Endothelial cell of umbilical vein (primary cell): ENCODE measurements at regions of chr9 and their contacts with region 1.

Region 1: GRCh38 chr9:121286973-121287741 is 19.2 kb downstream of the GSN start:
- DNase-seq: peak; percentile 98
- H3K4me3 ChIP-seq: peak overlapping the region in 1 of 3 experiments; percentile 20
- H3K27ac ChIP-seq: peak overlapping the region; percentile 93
- H3K4me1 ChIP-seq: peaks cover 64% of the 10 kb centered on the region
- H3K27me3 ChIP-seq: no peaks in the 10 kb centered on the region
- CTCF ChIP-seq: peak; percentile 23 to 24
- POLR2A ChIP-seq: no peak

Region 2: GRCh38 chr9:120792898-120793765 is 494.0 kb before region 1 on chr9 and contains the start of gene FBXW2:
- CTCF ChIA-PET with region 1: no interaction called
- POLR2A ChIA-PET with region 1: no interaction called
- dilution Hi-C with region 1: no loop called
- intact Hi-C with region 1: no loop called
- DNase-seq: peak; percentile 92
- H3K4me3 ChIP-seq: peak within 1 kb of the TSS; percentile 78 to 83 (median 82)
- H3K27ac ChIP-seq: peak within 1 kb of the TSS; percentile 64
- H3K4me1 ChIP-seq: peaks cover 27% of the 10 kb centered on the region
- H3K27me3 ChIP-seq: no peaks in the 10 kb centered on the region
- CTCF ChIP-seq: no peak
- POLR2A ChIP-seq: peak; percentile 95
- total RNA-seq, gene FBXW2: 70.2 and 72.3 TPM in 2 replicates

Region 3: DNA sequence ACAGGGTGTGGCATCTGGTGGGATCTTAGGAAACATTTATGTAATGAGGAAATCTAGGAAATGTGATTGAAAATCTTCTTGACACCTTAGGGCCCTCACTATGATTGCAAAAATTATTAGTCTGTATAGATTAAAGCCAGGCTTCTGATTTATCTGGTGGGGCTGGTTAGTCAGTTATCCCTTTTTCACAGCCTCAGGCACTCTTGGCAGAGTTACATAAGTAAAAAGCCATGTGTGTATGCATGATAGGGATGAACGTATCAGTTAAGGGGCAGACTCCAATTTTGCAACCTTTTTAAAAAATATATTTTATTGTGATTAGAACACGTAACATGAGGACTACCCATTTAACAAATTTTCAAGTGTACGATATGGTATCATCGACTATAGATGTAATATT is 54.9 kb before region 1 on chr9:
- CTCF ChIA-PET with region 1: no interaction called
- POLR2A ChIA-PET with region 1: no interaction called
- dilution Hi-C with region 1: no loop called
- intact Hi-C with region 1: no loop called
- DNase-seq: no peak
- H3K4me3 ChIP-seq: no peak overlapping the region
- H3K27ac ChIP-seq: no peak overlapping the region
- H3K4me1 ChIP-seq: peaks cover 6% of the 10 kb centered on the region
- H3K27me3 ChIP-seq: no peaks in the 10 kb centered on the region
- CTCF ChIP-seq: no peak
- POLR2A ChIP-seq: no peak

Region 4: DNA sequence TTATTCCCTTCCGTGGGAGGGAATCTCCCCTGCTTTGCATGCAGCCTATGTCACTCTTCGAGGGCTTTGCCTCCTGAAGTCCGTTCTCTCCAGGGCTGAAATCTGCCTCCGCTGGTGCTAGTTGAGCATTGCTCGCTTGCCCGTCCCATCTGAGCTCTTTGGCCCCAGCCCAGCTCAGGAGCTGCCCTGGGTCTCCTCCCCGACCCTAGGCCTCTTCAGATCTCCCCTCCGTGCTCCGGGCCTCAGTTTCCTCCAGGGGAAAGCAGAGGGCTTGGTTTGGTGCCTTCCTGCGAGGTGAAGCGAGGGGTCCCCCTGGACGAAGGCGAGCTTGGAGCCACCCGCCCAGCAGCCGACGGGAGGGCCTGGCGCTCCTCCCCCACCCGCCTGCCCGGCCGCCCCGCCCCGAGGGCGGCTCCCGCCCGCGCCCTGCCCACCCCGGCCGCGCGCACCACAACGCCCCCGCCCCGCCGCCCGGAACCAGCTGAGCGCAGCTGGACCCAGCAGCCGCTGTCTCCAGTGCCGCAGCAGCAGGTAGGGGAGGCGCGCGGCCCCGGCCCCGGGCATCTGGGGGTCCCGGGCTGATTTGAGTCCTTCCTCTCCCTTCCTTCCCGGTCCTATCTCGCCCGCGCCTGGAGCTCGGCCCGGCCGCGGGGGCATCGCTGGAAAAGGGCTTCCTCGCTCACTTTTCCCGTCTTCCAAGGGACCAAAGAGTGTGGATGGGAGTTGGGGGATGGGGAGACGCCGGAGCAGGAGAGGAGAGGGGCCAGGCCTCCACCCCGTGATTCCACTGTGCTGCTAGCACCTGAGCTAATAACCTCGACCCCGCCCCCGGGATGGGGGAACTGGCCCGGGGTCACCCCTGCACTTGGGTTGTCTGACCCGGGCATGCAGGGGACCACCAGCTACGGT is 19.2 kb before region 1 on chr9 and contains the start of gene GSN:
- CTCF ChIA-PET with region 1: interaction called, 11 read pairs
- POLR2A ChIA-PET with region 1: interaction called, 9 read pairs
- dilution Hi-C with region 1: no loop called
- intact Hi-C with region 1: loop called (anchors 1 kb)
- DNase-seq: peak; percentile 68
- H3K4me3 ChIP-seq: peak within 1 kb of the TSS; percentile 51 to 86 (median 81)
- H3K27ac ChIP-seq: no peak within 1 kb of the TSS
- H3K4me1 ChIP-seq: peaks cover 16% of the 10 kb centered on the region
- H3K27me3 ChIP-seq: peaks cover 0 to 2% of the 10 kb centered on the region in 2 experiments
- CTCF ChIP-seq: no peak
- POLR2A ChIP-seq: no peak
- total RNA-seq, gene GSN: 130 and 176 TPM in 2 replicates

Region 5: DNA sequence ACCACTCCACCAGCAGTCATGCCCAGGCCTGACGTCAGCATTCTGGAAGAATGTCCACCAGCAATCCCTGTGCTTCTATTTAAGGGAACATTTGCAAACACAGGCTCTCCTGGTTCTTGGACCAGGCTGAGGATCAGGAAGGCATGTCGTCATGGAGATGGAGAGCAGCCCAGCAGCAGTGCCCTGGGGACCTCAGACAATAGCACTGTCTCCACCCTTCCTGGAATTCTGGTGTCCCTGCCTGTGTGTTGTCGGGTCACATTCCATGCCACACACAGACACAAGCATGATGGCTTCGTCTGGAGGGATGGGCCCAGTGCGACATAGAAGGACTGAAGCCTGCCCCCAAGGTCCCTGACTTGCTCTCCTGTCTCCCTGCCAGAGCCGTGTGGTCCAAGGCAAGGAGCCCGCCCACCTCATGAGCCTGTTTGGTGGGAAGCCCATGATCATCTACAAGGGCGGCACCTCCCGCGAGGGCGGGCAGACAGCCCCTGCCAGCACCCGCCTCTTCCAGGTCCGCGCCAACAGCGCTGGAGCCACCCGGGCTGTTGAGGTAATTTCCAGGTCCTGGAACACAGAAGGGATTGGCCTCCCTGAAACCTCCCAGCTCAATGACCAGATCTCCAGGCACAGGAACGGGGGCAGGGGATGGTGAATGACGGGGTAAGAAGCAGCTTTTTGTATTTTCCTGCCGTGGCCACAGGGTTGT is 39.1 kb after region 1 on chr9:
- CTCF ChIA-PET with region 1: interaction called, 4 read pairs
- POLR2A ChIA-PET with region 1: no interaction called
- dilution Hi-C with region 1: no loop called
- intact Hi-C with region 1: loop called (anchors 1 kb)
- DNase-seq: peak; percentile 83
- H3K4me3 ChIP-seq: no peak overlapping the region
- H3K27ac ChIP-seq: peak overlapping the region; percentile 50
- H3K4me1 ChIP-seq: peaks cover 28% of the 10 kb centered on the region
- H3K27me3 ChIP-seq: no peaks in the 10 kb centered on the region
- CTCF ChIP-seq: no peak
- POLR2A ChIP-seq: no peak

Region 6: DNA sequence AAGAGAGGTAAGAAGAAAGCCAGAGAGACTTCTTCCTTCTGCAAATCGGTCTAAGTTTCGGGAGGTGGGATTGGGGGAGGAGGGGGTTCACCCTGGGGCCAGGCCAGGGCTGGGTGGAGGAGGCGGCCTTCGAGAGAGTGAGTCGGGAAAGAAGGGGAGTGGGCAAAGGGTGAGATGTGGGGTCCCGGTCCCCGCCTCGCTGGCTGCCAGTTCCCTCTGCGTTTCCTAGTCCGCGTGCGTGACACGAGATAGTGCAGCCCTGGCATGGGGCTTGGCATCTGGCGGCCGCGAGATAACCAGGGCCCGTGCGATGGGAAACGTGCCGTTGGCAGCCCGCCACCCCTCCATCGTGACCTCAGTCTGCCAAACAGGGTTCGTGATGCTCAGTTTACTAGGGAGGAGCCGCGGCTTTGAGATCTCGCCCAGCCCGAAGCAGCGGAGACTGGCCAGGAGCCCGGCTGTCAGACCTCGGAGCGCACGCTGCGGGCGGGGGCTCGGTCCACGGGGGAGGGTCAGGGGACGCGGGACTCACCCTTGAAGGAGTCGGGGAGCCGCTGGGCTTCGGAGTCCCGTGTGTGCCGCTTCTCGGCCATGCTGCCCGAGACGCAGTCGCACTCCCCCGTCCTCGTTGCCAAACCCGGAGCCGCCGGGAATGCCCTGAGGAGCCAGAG is 82.6 kb after region 1 on chr9 and contains the start of gene STOM:
- CTCF ChIA-PET with region 1: interaction called, 3 read pairs
- POLR2A ChIA-PET with region 1: interaction called, 3 read pairs
- dilution Hi-C with region 1: no loop called
- intact Hi-C with region 1: loop called (anchors 1 kb)
- DNase-seq: peak; percentile 89
- H3K4me3 ChIP-seq: peak within 1 kb of the TSS; percentile 66 to 88 (median 78)
- H3K27ac ChIP-seq: peak within 1 kb of the TSS; percentile 93
- H3K4me1 ChIP-seq: peaks cover 43% of the 10 kb centered on the region
- H3K27me3 ChIP-seq: no peaks in the 10 kb centered on the region
- CTCF ChIP-seq: no peak
- POLR2A ChIP-seq: peak; percentile 98
- total RNA-seq, gene STOM: 138 and 170 TPM in 2 replicates